PC-9 (cell line): ENCODE measurements at regions of chr6 and their contacts with region 1.

Region 1: GRCh38 chr6:72411872-72412708 is 209.8 kb upstream of the KCNQ5 start:
- DNase-seq: peak; percentile 42 to 82
- H3K4me3 ChIP-seq: no peak overlapping the region
- H3K27ac ChIP-seq: no peak overlapping the region
- H3K4me1 ChIP-seq: no peaks in the 10 kb centered on the region
- H3K27me3 ChIP-seq: no peaks in the 10 kb centered on the region
- CTCF ChIP-seq: peak; percentile 100

Region 2: GRCh38 chr6:72212686-72213085 is 199.4 kb before region 1 on chr6:
- CTCF ChIA-PET with region 1: interaction called, 14 read pairs
- POLR2A ChIA-PET with region 1: no interaction called
- intact Hi-C with region 1: no loop called
- DNase-seq: no peak
- H3K4me3 ChIP-seq: no peak overlapping the region
- H3K27ac ChIP-seq: no peak overlapping the region
- H3K4me1 ChIP-seq: no peaks in the 10 kb centered on the region; the same call in 1 of the 2 replicates
- H3K27me3 ChIP-seq: no peaks in the 10 kb centered on the region
- CTCF ChIP-seq: no peak

Region 3: GRCh38 chr6:72322771-72323170 is 89.3 kb before region 1 on chr6:
- CTCF ChIA-PET with region 1: no interaction called
- POLR2A ChIA-PET with region 1: no interaction called
- intact Hi-C with region 1: no loop called
- DNase-seq: no peak
- H3K4me3 ChIP-seq: no peak overlapping the region
- H3K27ac ChIP-seq: no peak overlapping the region
- H3K4me1 ChIP-seq: no peaks in the 10 kb centered on the region
- H3K27me3 ChIP-seq: no peaks in the 10 kb centered on the region
- CTCF ChIP-seq: no peak

Region 4: DNA sequence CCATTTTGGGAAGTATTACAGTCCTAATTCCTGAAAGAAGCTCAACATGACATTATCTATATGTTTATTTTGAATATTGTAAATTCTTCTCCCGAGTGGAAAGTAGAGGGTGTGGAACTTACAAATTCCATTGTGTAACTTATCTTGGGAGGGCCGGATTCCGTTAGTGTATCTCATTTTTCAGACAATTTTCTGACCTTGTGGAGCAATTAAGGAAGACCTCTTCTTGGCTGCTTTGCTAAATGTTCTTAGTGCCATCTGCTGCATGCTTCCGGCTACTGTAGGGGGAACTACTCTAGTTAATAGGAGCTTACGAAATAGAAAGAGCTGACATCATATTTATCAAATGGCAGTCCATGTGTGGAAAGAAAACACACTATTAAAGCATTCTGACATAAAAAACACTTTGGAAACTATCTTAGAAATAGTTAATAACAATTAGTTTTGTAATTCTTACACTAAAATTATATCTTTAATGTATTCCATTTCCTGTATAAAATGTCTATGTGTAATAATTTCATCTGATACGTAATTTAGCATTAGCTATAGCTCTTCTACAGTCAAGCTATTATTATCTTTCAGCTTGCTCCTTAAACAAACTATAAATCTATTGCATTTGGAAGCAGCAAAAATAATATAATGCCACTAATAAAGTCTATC is 168.3 kb after region 1 on chr6:
- CTCF ChIA-PET with region 1: interaction called, 6 read pairs
- POLR2A ChIA-PET with region 1: no interaction called
- intact Hi-C with region 1: loop called (anchors 5 kb)
- DNase-seq: peak in 1 of 2 experiments; percentile 10
- H3K4me3 ChIP-seq: no peak overlapping the region
- H3K27ac ChIP-seq: no peak overlapping the region
- H3K4me1 ChIP-seq: no peaks in the 10 kb centered on the region
- H3K27me3 ChIP-seq: no peaks in the 10 kb centered on the region
- CTCF ChIP-seq: peak; percentile 43; the same call in 1 of the 2 replicates

Region 5: GRCh38 chr6:73180763-73181619 is 768.9 kb after region 1 on chr6:
- CTCF ChIA-PET with region 1: no interaction called
- POLR2A ChIA-PET with region 1: no interaction called
- intact Hi-C with region 1: loop called (anchors 1 kb)
- DNase-seq: peak; percentile 20 to 55
- H3K4me3 ChIP-seq: no peak overlapping the region; the same call in 1 of the 2 replicates
- H3K27ac ChIP-seq: no peak overlapping the region
- H3K4me1 ChIP-seq: no peaks in the 10 kb centered on the region
- H3K27me3 ChIP-seq: no peaks in the 10 kb centered on the region
- CTCF ChIP-seq: peak; percentile 90

Region 6: GRCh38 chr6:73299151-73299971 is 887.3 kb after region 1 on chr6:
- CTCF ChIA-PET with region 1: no interaction called
- POLR2A ChIA-PET with region 1: no interaction called
- intact Hi-C with region 1: no loop called
- DNase-seq: no peak
- H3K4me3 ChIP-seq: no peak overlapping the region
- H3K27ac ChIP-seq: no peak overlapping the region
- H3K4me1 ChIP-seq: no peaks in the 10 kb centered on the region
- H3K27me3 ChIP-seq: no peaks in the 10 kb centered on the region
- CTCF ChIP-seq: no peak